Pancreas (tissue), 10 donors: ENCODE measurements at regions of chr10 and their contacts with region 1.

Region 1: GRCh38 chr10:73879296-73880173 is 5.2 kb upstream of the CAMK2G start:
- DNase-seq: peak; percentile 68 to 92 (median 84)
- ATAC-seq: peak; percentile 88 to 95 (median 94)
- H3K4me3 ChIP-seq: no peak overlapping the region
- H3K27ac ChIP-seq: no peak overlapping the region
- H3K4me1 ChIP-seq: no peaks in the 10 kb centered on the region
- H3K27me3 ChIP-seq: no peaks in the 10 kb centered on the region
- CTCF ChIP-seq: peak; percentile 70 to 88 (median 86)

Region 2: GRCh38 chr10:72925951-72926465 is 953.5 kb before region 1 on chr10:
- intact Hi-C with region 1: no loop called
- DNase-seq: no peak
- ATAC-seq: no peak
- H3K4me3 ChIP-seq: no peak overlapping the region
- H3K27ac ChIP-seq: no peak overlapping the region
- H3K4me1 ChIP-seq: no peaks in the 10 kb centered on the region
- H3K27me3 ChIP-seq: no peaks in the 10 kb centered on the region
- CTCF ChIP-seq: no peak

Region 3: GRCh38 chr10:73848821-73849489 is 30.6 kb before region 1 on chr10:
- intact Hi-C with region 1: loop called in 1 of 3 experiments (anchors 5 kb)
- DNase-seq: peak; percentile 65 to 96 (median 83)
- ATAC-seq: peak; percentile 90 to 98 (median 96)
- H3K4me3 ChIP-seq: no peak overlapping the region
- H3K27ac ChIP-seq: no peak overlapping the region
- H3K4me1 ChIP-seq: no peaks in the 10 kb centered on the region
- H3K27me3 ChIP-seq: no peaks in the 10 kb centered on the region
- CTCF ChIP-seq: peak; percentile 97 to 99 (median 98)

Region 4: GRCh38 chr10:73940634-73941221 is 61.2 kb after region 1 on chr10:
- intact Hi-C with region 1: loop called in 1 of 3 experiments (anchors 10 kb)
- DNase-seq: peak; percentile 64 to 93 (median 82)
- ATAC-seq: peak; percentile 94 to 99 (median 98)
- H3K4me3 ChIP-seq: peak overlapping the region in 2 of 4 donors; percentile 18 to 30
- H3K27ac ChIP-seq: no peak overlapping the region
- H3K4me1 ChIP-seq: no peaks in the 10 kb centered on the region
- H3K27me3 ChIP-seq: no peaks in the 10 kb centered on the region
- CTCF ChIP-seq: peak; percentile 72 to 95 (median 85)

Region 5: DNA sequence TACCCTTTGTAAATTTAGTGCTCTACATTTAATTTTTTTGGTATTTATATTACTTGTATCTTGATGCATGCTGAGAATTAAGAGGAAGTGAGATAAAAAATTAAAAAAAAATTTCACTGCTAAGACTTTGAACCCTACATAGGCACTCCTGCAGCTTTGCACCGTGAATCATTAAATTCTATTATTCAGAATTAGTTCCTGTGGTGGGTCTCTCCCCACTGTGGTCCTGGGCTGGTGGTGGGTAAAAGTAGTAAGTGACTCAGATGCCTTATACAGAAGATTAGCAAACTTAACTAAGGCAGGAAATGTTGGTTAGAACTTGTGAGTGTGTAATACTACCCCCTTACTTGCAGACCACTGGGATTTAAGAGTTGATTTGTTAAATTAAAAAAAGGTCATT is 198.5 kb after region 1 on chr10:
- intact Hi-C with region 1: loop called in 1 of 3 experiments (anchors 10 kb)
- DNase-seq: no peak
- ATAC-seq: peak in 3 of 4 donors; percentile 36 to 62 (median 43)
- H3K4me3 ChIP-seq: no peak overlapping the region
- H3K27ac ChIP-seq: no peak overlapping the region
- H3K4me1 ChIP-seq: peaks cover 0 to 11% (median 0%) of the 10 kb centered on the region in 3 donors
- H3K27me3 ChIP-seq: no peaks in the 10 kb centered on the region
- CTCF ChIP-seq: no peak

Region 6: GRCh38 chr10:74977913-74978847 is 1098.6 kb after region 1 on chr10:
- intact Hi-C with region 1: no loop called
- DNase-seq: no peak
- ATAC-seq: no peak
- H3K4me3 ChIP-seq: no peak overlapping the region
- H3K27ac ChIP-seq: no peak overlapping the region
- H3K4me1 ChIP-seq: peaks cover 15 to 44% (median 18%) of the 10 kb centered on the region in 3 donors
- H3K27me3 ChIP-seq: no peaks in the 10 kb centered on the region
- CTCF ChIP-seq: no peak